Activated T-helper 1 cell treated with anti-CD3 and anti-CD28 coated beads, Interleukin-12 subunit alpha, Interleukin-12 subunit beta, Interleukin-2, Interleukin-4 antibody, amounts not matched to agents 30 ng/mL and 10 ng/mL and 1 ng/mL, durations not matched to agents 14 hours and 24 hours and 36 hours (primary cell): ENCODE measurements at regions of chr17 and their contacts with region 1.

Region 1: GRCh38 chr17:4375039-4375748 is 8.7 kb upstream of the UBE2G1 start:
- DNase-seq: peak; percentile 60
- H3K4me3 Mint-ChIP-seq: peak overlapping the region; percentile 60
- H3K27ac Mint-ChIP-seq: peak overlapping the region; percentile 89
- H3K4me1 Mint-ChIP-seq: peaks cover 32% of the 10 kb centered on the region
- H3K27me3 Mint-ChIP-seq: no peaks in the 10 kb centered on the region

Region 2: GRCh38 chr17:4263282-4264215 is 111.6 kb before region 1 on chr17 and contains the start of gene ANKFY1:
- intact Hi-C with region 1: no loop called
- DNase-seq: peak; percentile 98
- H3K4me3 Mint-ChIP-seq: peak within 1 kb of the TSS; percentile 98
- H3K27ac Mint-ChIP-seq: peak within 1 kb of the TSS; percentile 95
- H3K4me1 Mint-ChIP-seq: peaks cover 37% of the 10 kb centered on the region
- H3K27me3 Mint-ChIP-seq: no peaks in the 10 kb centered on the region
- total RNA-seq, gene ANKFY1: 53.8 and 60.1 TPM in 2 replicates

Region 3: GRCh38 chr17:4394208-4395110 is 19.3 kb after region 1 on chr17:
- intact Hi-C with region 1: loop called (anchors 1 kb)
- DNase-seq: no peak
- H3K4me3 Mint-ChIP-seq: no peak overlapping the region
- H3K27ac Mint-ChIP-seq: no peak overlapping the region
- H3K4me1 Mint-ChIP-seq: peaks cover 25% of the 10 kb centered on the region
- H3K27me3 Mint-ChIP-seq: peaks cover 2% of the 10 kb centered on the region